IMR-90 (cell line): ENCODE measurements at regions of chr6 and their contacts with region 1.

Region 1: DNA sequence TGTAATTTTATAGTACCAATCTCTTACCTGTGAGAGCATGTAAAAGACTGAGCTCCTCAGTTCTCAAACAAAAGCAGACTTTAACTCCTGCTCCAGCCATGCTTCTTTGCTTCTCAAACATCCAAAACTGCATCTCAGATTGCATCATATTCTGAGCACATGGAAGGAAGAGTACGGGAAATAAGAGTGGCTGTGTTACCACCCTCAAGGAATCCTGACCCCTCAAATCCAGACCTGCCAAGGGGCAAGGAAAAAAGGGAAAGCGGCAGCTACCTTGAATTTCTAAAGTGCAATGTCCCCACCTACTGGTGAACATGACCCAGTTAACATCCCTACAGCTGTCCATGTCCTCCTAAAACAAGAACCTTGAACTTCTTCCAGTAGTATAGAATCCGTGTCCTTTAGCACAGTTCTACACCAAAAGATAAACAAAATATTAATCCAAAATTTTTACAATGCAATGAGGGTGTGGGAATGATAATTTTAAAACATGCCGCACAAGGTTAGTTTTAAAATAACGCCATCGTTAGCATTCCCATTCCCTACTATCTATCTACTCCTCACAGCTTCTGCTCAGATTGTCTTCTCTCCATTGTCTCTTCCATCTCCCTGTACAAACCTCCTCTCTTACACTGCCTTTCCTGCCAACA is 34.1 kb upstream of the HLA-DQB1 start:
- DNase-seq: peak; percentile 59
- ATAC-seq: peak; percentile 93
- H3K4me3 ChIP-seq: no peak overlapping the region
- H3K27ac ChIP-seq: no peak overlapping the region
- H3K4me1 ChIP-seq: no peaks in the 10 kb centered on the region
- H3K27me3 ChIP-seq: peaks cover 2% of the 10 kb centered on the region
- CTCF ChIP-seq: peak; percentile 55
- POLR2A ChIP-seq: no peak
- RAD21 ChIP-seq: peak; percentile 54

Region 2: GRCh38 chr6:31806465-31807272 is 893.8 kb before region 1 on chr6 and contains the start of gene LSM2:
- CTCF ChIA-PET with region 1: no interaction called
- POLR2A ChIA-PET with region 1: no interaction called
- dilution Hi-C with region 1: no loop called
- in situ Hi-C with region 1: no loop called
- intact Hi-C with region 1: no loop called
- DNase-seq: peak; percentile 96
- ATAC-seq: peak; percentile 100
- H3K4me3 ChIP-seq: peak within 1 kb of the TSS; percentile 57
- H3K27ac ChIP-seq: peak within 1 kb of the TSS; percentile 46
- H3K4me1 ChIP-seq: peaks cover 3% of the 10 kb centered on the region; the same call in 1 of the 2 replicates
- H3K27me3 ChIP-seq: no peaks in the 10 kb centered on the region
- CTCF ChIP-seq: peak; percentile 28; the same call in 1 of the 2 replicates
- POLR2A ChIP-seq: peak; percentile 51; the same call in 1 of the 2 replicates
- RAD21 ChIP-seq: 0 out of 2 replicates have a peak, but pooled peaks have one; percentile 0
- total RNA-seq, gene LSM2: 48.0 and 56.3 TPM in 2 replicates

Region 3: GRCh38 chr6:32432050-32432450 is 268.5 kb before region 1 on chr6:
- CTCF ChIA-PET with region 1: no interaction called
- POLR2A ChIA-PET with region 1: no interaction called
- dilution Hi-C with region 1: no loop called
- in situ Hi-C with region 1: no loop called
- intact Hi-C with region 1: loop called (anchors 5 kb)
- DNase-seq: peak; percentile 30
- ATAC-seq: no peak; the same call in 1 of the 2 replicates
- H3K4me3 ChIP-seq: no peak overlapping the region
- H3K27ac ChIP-seq: no peak overlapping the region
- H3K4me1 ChIP-seq: no peaks in the 10 kb centered on the region
- H3K27me3 ChIP-seq: no peaks in the 10 kb centered on the region; the same call in 1 of the 2 replicates
- CTCF ChIP-seq: peak; percentile 40
- POLR2A ChIP-seq: no peak
- RAD21 ChIP-seq: peak; percentile 21

Region 4: DNA sequence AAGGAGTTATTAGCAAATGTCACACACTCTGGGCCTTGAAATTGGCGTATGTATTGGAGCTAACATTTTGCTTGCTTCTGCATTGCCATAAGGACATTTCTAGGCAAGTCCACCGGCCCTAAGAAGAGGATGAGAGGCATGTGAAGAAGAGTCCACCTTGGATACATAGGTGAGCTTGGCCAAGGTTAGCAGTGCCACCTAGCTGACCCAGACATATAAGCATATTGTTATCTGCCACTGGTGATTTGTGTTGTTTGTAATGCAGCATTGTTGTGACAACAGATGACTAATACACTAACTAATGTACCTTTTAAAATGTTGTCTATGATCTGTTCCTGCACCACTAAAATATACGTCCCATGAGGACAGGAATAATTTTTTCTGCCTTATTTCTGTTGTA is 15.9 kb after region 1 on chr6:
- CTCF ChIA-PET with region 1: no interaction called
- POLR2A ChIA-PET with region 1: no interaction called
- dilution Hi-C with region 1: no loop called
- in situ Hi-C with region 1: no loop called
- intact Hi-C with region 1: no loop called
- DNase-seq: no peak
- ATAC-seq: no peak
- H3K4me3 ChIP-seq: no peak overlapping the region
- H3K27ac ChIP-seq: no peak overlapping the region
- H3K4me1 ChIP-seq: no peaks in the 10 kb centered on the region
- H3K27me3 ChIP-seq: peaks cover 1% of the 10 kb centered on the region; the same call in 1 of the 2 replicates
- CTCF ChIP-seq: no peak
- POLR2A ChIP-seq: no peak
- RAD21 ChIP-seq: no peak

Region 5: GRCh38 chr6:32785781-32786533 is 85.4 kb after region 1 on chr6:
- CTCF ChIA-PET with region 1: no interaction called
- POLR2A ChIA-PET with region 1: no interaction called
- dilution Hi-C with region 1: no loop called
- in situ Hi-C with region 1: no loop called
- intact Hi-C with region 1: loop called (anchors 5 kb)
- DNase-seq: peak; percentile 49
- ATAC-seq: peak; percentile 81
- H3K4me3 ChIP-seq: no peak overlapping the region
- H3K27ac ChIP-seq: no peak overlapping the region
- H3K4me1 ChIP-seq: no peaks in the 10 kb centered on the region
- H3K27me3 ChIP-seq: peaks cover 4% of the 10 kb centered on the region
- CTCF ChIP-seq: peak; percentile 53
- POLR2A ChIP-seq: no peak
- RAD21 ChIP-seq: peak; percentile 44

Region 6: DNA sequence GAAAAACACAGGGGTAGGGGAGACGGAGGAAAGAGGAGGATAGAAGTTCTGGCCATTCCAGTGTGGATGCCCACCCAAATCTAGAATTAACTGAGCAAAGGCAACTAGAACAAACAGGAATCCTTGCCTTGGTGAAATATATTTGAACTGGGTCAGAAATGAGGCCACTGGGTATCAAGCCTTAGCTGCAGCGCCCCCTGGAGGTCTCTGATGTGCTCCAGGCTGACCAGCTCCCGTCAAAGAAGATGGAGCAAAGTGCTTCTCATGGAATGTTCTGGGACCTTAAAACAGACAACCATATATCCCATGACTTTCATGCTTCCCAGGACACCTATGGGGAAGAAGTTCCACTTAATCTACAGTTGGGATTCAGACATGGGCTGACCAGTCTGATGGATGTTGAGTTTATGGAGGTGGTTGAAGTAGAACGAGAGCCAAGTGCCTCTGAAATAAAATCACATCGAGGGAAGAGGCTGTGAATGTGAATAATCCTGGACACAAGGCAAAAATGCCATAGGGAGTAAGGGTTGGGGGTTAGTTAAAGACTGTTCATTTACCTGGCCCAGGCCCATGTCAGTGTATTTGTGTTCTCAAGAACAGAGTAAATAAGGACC is 425.7 kb after region 1 on chr6:
- CTCF ChIA-PET with region 1: no interaction called
- POLR2A ChIA-PET with region 1: no interaction called
- dilution Hi-C with region 1: no loop called
- in situ Hi-C with region 1: no loop called
- intact Hi-C with region 1: no loop called
- DNase-seq: peak; percentile 12
- ATAC-seq: peak; percentile 57; the same call in 1 of the 2 replicates
- H3K4me3 ChIP-seq: no peak overlapping the region
- H3K27ac ChIP-seq: no peak overlapping the region
- H3K4me1 ChIP-seq: no peaks in the 10 kb centered on the region
- H3K27me3 ChIP-seq: peaks cover 41% of the 10 kb centered on the region
- CTCF ChIP-seq: peak; percentile 53
- POLR2A ChIP-seq: no peak
- RAD21 ChIP-seq: no peak